GM10248 (cell line): ENCODE measurements at regions of chr11 and their contacts with region 1.

Region 1: GRCh38 chr11:73429121-73429750 is 53.0 kb downstream of the RELT start:
- DNase-seq: no peak
- CTCF ChIP-seq: no peak

Region 2: DNA sequence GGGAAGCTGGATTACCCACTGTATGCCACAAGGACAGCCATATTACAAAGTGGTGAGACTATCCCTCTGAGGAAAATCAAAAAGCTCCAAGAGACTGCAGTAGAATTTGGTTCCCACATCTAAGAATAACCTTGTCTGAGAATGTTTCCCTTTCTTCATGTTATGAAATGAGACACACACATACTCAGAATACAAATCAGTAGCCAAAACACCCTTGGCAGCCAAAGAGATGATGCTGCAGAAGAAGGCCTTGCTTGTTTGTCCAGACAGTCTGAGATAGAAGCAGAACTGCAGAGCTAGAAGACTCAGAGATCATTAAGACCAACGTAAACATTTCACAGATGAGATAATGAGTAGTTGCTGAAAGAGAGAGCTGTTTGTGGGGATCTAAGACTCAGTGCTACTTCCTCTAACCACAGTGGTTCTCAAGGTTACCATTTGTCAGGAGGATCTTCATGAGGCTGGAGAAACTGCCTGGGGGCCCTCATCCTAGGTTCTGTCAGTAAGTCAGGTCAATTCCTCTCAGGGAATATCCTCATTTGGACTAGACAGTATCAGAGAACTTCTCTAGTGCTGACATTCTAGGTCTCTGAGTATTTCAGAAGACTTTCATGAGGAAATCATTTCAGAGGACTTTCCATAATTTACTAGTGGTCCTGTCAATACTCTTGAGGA is 14.1 kb before region 1 on chr11:
- CTCF ChIA-PET with region 1: interaction called, 17 read pairs
- POLR2A ChIA-PET with region 1: no interaction called
- DNase-seq: peak; percentile 36
- CTCF ChIP-seq: no peak

Region 3: GRCh38 chr11:73463359-73463758 is 34.1 kb after region 1 on chr11:
- CTCF ChIA-PET with region 1: no interaction called
- POLR2A ChIA-PET with region 1: no interaction called
- DNase-seq: no peak
- CTCF ChIP-seq: no peak

Region 4: GRCh38 chr11:73542175-73542574 is 112.9 kb after region 1 on chr11:
- CTCF ChIA-PET with region 1: no interaction called
- POLR2A ChIA-PET with region 1: no interaction called
- DNase-seq: no peak
- CTCF ChIP-seq: no peak